Left ventricle myocardium inferior (tissue), 1 donor: ENCODE measurements at regions of chr7 and their contacts with region 1.

Region 1: DNA sequence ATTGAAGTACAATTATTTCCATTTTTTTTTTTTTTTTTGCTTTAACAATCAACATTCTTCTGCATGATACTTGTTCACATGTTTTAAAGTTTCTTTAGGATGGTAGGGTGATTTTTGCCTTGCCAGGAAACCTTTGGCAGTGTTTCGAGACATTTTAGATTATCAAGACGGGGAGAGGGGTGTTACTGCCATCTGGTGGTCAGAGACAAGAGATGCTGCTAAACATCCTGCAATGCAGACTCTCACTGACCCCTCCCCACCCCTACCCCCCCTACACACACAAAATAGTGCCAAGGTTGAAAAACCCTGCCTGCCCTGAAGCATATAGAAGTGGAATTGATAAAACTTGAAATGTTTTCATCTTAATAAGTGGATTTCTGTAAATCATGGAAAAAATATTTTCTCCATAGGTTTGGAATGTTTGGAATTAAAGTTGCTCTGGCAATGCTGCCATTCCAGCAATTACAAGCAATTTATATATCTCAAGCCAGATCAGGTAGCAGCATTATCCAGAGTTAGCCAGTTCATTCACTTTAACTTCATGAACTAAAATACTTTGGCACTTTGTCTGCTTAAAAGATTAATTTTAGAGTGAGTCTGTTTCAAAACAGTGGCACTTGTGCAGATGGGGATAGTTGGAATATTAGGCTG is 62.1 kb downstream of the SDHAF3 start:
- DNase-seq: no peak
- H3K4me3 ChIP-seq: no peak overlapping the region
- H3K27ac ChIP-seq: no peak overlapping the region
- H3K4me1 ChIP-seq: no peaks in the 10 kb centered on the region
- H3K27me3 ChIP-seq: no peaks in the 10 kb centered on the region
- CTCF ChIP-seq: peak; percentile 88

Region 2: GRCh38 chr7:97104719-97105238 is 74.8 kb before region 1 on chr7:
- intact Hi-C with region 1: loop called (anchors 2 kb)
- DNase-seq: peak; percentile 82
- H3K4me3 ChIP-seq: no peak overlapping the region
- H3K27ac ChIP-seq: no peak overlapping the region
- H3K4me1 ChIP-seq: peaks cover 3% of the 10 kb centered on the region
- H3K27me3 ChIP-seq: peaks cover 12% of the 10 kb centered on the region
- CTCF ChIP-seq: peak; percentile 86

Region 3: DNA sequence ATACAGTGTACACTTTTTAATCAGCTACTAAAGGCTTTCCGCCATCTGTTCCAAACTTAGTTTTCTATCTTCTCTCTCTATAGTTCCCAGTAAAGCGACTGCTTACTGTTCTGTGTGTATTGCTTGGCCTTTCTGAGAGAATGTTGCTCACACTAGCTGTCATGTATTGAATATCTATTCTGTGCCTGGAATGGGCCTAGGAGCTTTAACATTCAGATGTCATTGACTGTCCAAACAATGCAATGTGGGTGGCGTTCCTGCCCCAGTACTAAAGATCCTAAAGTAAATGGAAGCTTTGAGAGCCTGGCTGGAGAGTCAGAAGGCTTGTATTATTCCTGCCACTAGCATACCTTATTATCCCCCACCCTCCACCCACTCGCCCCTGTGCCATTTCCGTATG is 101.4 kb after region 1 on chr7:
- intact Hi-C with region 1: no loop called
- DNase-seq: no peak
- H3K4me3 ChIP-seq: no peak overlapping the region
- H3K27ac ChIP-seq: no peak overlapping the region
- H3K4me1 ChIP-seq: no peaks in the 10 kb centered on the region
- H3K27me3 ChIP-seq: no peaks in the 10 kb centered on the region
- CTCF ChIP-seq: no peak